ENCODE measurements at regions of chr1 and their contacts with region 1.

Region 1: GRCh38 chr1:46247436-46248121 is at the start of gene RAD54L:
- DNase-seq: peak; percentile 88 to 98 (median 93)
- ATAC-seq: peak; percentile 95 to 97 (median 96)
- H3K4me3 ChIP-seq: peak within 1 kb of the TSS; percentile 69 to 71
- H3K4me3 Mint-ChIP-seq: peak within 1 kb of the TSS; percentile 85 to 90 (median 88)
- H3K27ac ChIP-seq: peak within 1 kb of the TSS; percentile 16
- H3K27ac Mint-ChIP-seq: peak within 1 kb of the TSS; percentile 49 to 73
- H3K4me1 ChIP-seq: peaks cover 5 to 20% of the 10 kb centered on the region in 2 experiments
- H3K4me1 Mint-ChIP-seq: peaks cover 12 to 18% (median 17%) of the 10 kb centered on the region in 3 donors
- H3K27me3 ChIP-seq: no peaks in the 10 kb centered on the region
- H3K27me3 Mint-ChIP-seq: no peaks in the 10 kb centered on the region
- total RNA-seq, gene RAD54L: 1.1 to 2.8 (median 1.8) TPM

Region 2: DNA sequence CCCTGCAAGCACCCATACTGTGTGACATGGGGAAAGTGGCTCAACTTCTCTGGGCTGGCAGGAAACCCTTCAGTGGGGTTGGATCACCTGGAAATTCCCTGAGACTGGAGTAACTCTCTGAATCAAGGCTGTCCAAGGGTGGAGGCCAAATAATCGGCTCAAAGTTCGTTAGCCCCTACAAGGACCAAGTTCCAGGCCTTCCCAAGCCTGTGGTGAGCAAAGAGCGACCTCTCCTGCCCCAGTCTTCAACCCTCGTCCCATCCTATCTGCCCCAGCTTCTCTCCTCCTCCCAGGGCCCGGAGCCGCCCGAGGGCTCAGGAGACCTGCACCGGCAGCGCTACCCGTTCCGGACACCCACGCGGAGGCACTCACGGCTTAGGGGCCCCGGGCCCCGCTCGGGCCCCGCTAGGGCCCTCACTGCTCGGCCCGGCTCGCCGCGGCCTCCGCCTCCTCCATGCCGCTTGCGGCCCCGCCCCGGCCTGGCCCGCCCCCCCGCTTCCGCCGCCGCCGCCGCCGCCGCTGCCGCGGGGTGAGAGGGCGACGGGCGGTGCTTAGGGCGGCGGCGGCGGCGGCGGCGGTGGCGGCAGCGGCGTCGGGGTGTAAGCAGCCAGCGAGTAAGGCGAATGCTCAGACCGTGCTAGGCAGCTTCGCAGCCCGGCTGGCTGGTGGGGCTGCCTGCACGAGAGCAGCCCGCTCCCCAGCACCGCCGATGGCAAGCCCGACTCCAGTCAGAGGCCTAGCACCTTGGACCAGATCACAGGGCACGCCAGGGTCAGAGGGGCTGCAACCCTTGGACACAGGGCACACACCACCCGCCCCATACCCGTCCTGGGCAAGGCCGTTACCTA is 49.4 kb before region 1 on chr1 and contains the start of gene POMGNT1:
- CTCF ChIA-PET with region 1: interaction called in 1 of 2 experiments, 4 read pairs
- POLR2A ChIA-PET with region 1: interaction called in 1 of 2 experiments, 13 read pairs
- DNase-seq: peak; percentile 34 to 87 (median 71)
- ATAC-seq: peak; percentile 95 to 97 (median 96)
- H3K4me3 ChIP-seq: peak within 1 kb of the TSS; percentile 80 to 89
- H3K4me3 Mint-ChIP-seq: peak within 1 kb of the TSS; percentile 75 to 84 (median 82)
- H3K27ac ChIP-seq: peak within 1 kb of the TSS; percentile 59
- H3K27ac Mint-ChIP-seq: peak within 1 kb of the TSS; percentile 70 to 86
- H3K4me1 ChIP-seq: peaks cover 15 to 36% of the 10 kb centered on the region in 2 experiments
- H3K4me1 Mint-ChIP-seq: peaks cover 25 to 30% (median 26%) of the 10 kb centered on the region in 3 donors
- H3K27me3 ChIP-seq: peaks cover 0 to 4% of the 10 kb centered on the region in 2 experiments
- H3K27me3 Mint-ChIP-seq: peaks cover 0 to 3% of the 10 kb centered on the region in 2 donors
- total RNA-seq, gene POMGNT1: 38.0 to 49.6 (median 42.2) TPM

Region 3: DNA sequence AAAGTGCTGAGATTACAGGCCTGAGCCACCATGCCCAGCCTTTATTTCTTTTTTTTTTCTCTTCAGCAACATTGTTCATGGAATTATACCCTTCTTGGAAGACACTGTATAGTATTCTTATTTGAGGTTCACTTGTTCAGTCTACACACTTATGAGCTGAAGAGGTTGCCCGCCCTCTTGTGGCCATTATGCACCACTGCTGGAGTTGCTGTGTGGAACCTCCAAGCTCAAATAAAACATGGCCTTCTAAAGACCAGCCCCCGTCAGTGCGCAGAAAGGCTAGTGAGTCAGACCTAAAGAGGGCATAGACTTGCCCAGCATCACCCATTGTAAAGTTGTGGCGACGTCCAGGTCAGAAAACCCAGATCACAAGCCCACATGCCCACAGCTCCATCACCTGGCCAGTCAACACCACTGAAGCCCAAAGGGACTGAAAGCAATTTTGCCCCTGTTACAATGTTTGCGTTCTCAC is 24.1 kb before region 1 on chr1:
- CTCF ChIA-PET with region 1: interaction called, 5 to 12 read pairs
- POLR2A ChIA-PET with region 1: no interaction called
- DNase-seq: peak in 34 of 35 experiments; percentile 6 to 80 (median 45)
- ATAC-seq: peak; percentile 80 to 95 (median 92)
- H3K4me3 ChIP-seq: no peak overlapping the region
- H3K4me3 Mint-ChIP-seq: no peak overlapping the region
- H3K27ac ChIP-seq: no peak overlapping the region
- H3K27ac Mint-ChIP-seq: no peak overlapping the region
- H3K4me1 ChIP-seq: peaks cover 0 to 3% of the 10 kb centered on the region in 2 experiments
- H3K4me1 Mint-ChIP-seq: peaks cover 2 to 5% (median 3%) of the 10 kb centered on the region in 3 donors
- H3K27me3 ChIP-seq: peaks cover 0 to 7% of the 10 kb centered on the region in 2 experiments
- H3K27me3 Mint-ChIP-seq: no peaks in the 10 kb centered on the region

Region 4: DNA sequence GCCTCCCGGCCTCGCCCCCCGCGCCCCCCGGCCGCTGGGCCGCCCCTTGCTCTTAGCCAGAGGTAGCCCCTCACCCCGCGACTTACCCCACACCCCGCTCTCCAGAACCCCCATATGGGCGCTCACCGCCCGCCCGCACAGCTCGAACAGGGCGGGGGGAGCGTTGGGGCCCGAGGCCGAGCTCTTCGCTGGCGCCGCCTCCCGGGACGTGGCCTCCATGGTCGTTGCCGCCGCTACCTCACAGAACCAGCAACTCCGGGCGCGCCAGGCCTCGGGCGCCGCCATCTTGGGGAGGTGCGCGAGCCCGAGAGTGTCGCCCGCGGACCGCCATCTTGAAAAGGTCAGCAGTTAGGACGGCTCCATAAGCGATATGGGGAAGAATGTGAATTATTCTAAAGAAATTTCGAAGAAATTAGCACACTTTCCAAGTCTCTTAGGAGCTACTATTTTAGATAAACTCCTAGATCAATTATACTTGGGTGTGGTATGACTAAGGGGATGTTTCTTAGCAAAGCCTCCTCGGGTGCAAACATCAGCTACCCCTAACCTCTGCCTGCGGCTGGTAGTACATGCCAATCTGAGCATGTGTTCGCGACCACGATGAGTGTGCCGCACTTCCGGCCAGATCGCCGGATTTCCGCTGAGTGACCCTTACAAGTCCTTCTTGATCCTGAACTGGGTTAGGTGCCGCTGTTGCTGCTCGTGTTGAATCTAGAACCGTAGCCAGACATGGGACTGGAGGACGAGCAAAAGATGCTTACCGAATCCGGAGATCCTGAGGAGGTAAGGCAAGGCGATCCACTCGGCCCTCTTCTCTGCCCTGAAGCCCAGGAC is 55.7 kb after region 1 on chr1 and contains the starts of genes LRRC41 and UQCRH:
- CTCF ChIA-PET with region 1: interaction called in 1 of 2 experiments, 5 read pairs
- POLR2A ChIA-PET with region 1: interaction called in 1 of 2 experiments, 18 read pairs
- DNase-seq: peak; percentile 83 to 97 (median 90)
- ATAC-seq: peak; percentile 87 to 90 (median 89)
- H3K4me3 ChIP-seq: peak within 1 kb of the TSS; percentile 84 to 91
- H3K4me3 Mint-ChIP-seq: peak within 1 kb of the TSS; percentile 94 to 98 (median 96)
- H3K27ac ChIP-seq: peak within 1 kb of the TSS; percentile 85
- H3K27ac Mint-ChIP-seq: peak within 1 kb of the TSS; percentile 95 to 96
- H3K4me1 ChIP-seq: peaks cover 14 to 51% of the 10 kb centered on the region in 2 experiments
- H3K4me1 Mint-ChIP-seq: peaks cover 50 to 64% (median 53%) of the 10 kb centered on the region in 3 donors
- H3K27me3 ChIP-seq: no peaks in the 10 kb centered on the region
- H3K27me3 Mint-ChIP-seq: no peaks in the 10 kb centered on the region
- total RNA-seq, gene LRRC41: 31.4 to 35.3 (median 34.6) TPM
- total RNA-seq, gene UQCRH: 96.3 to 141 (median 127) TPM

Region 5: DNA sequence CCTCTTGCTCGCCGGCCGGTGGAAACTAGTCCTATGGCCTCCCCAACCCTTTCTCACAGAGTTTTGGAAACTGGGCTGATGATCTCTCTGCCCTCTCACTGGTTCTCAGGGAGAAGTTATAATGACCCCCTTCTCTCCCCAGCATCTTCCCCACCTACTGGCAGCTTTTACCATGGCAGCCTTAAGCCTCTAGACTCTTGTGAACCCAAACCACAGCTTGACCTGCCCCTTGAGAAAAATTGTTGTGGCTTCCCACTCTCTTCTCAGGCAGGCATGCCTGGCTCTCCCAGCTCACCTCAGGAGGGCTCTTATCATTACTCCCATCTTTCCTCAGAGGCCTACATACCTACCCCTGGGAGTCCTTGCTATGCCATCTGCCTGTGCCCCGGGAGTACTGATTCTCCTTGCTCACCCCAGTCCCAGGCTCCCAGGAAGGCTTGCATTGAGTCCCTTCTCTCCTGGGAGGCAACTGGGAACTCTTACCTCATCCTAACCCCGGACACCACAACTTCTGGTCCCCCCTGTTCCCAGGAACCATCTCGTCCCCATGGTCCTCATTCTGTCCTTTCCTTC is 94.6 kb after region 1 on chr1:
- CTCF ChIA-PET with region 1: interaction called, 7 to 18 read pairs
- POLR2A ChIA-PET with region 1: interaction called in 1 of 2 experiments, 3 read pairs
- DNase-seq: peak in 6 of 35 experiments; percentile 4 to 45 (median 22)
- ATAC-seq: no peak
- H3K4me3 ChIP-seq: no peak overlapping the region
- H3K4me3 Mint-ChIP-seq: peak overlapping the region; percentile 93 to 100 (median 99)
- H3K27ac ChIP-seq: peak overlapping the region; percentile 98
- H3K27ac Mint-ChIP-seq: peak overlapping the region; percentile 98 to 99
- H3K4me1 ChIP-seq: peaks cover 2 to 27% of the 10 kb centered on the region in 2 experiments
- H3K4me1 Mint-ChIP-seq: peaks cover 44 to 51% (median 44%) of the 10 kb centered on the region in 3 donors
- H3K27me3 ChIP-seq: no peaks in the 10 kb centered on the region
- H3K27me3 Mint-ChIP-seq: no peaks in the 10 kb centered on the region